ENCODE measurements at regions of chr6 and their contacts with region 1.

Region 1: DNA sequence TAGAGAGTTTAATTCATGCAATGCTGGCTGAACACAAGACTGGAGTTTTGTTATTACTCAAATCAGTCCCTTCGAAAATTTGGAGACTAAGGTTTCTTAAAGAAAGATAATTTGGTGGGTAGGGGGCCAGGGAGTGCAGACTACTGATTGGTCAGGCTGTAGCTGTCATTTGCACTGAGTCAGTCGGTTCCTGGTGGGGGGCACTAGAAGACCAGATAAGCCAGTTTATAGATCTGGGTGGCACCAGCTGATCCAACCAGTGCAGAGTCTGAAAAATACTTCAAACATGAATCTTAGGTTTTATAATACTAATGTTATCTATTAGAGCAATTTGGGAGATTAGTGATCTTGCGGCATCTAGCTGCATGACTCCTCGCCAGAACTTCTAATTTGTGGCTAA is 530.7 kb downstream of the NKAIN2 start:
- DNase-seq: no peak
- ATAC-seq: no peak
- H3K4me3 ChIP-seq: no peak overlapping the region
- H3K27ac ChIP-seq: no peak overlapping the region
- H3K4me1 ChIP-seq: no peaks in the 10 kb centered on the region
- H3K27me3 ChIP-seq: no peaks in the 10 kb centered on the region
- CTCF ChIP-seq: no peak
- EP300 ChIP-seq: no peak
- POLR2A ChIP-seq: no peak
- RAD21 ChIP-seq: no peak

Region 2: GRCh38 chr6:124420116-124420840 is 85.9 kb after region 1 on chr6:
- CTCF ChIA-PET with region 1: no interaction called
- POLR2A ChIA-PET with region 1: no interaction called
- RAD21 ChIA-PET with region 1: no interaction called
- SMC1A ChIA-PET with region 1: no interaction called
- in situ Hi-C with region 1: no loop called
- intact Hi-C with region 1: loop called (anchors 5 kb)
- DNase-seq: no peak
- ATAC-seq: no peak
- H3K4me3 ChIP-seq: no peak overlapping the region
- H3K27ac ChIP-seq: no peak overlapping the region
- H3K4me1 ChIP-seq: no peaks in the 10 kb centered on the region
- H3K27me3 ChIP-seq: no peaks in the 10 kb centered on the region
- CTCF ChIP-seq: no peak
- EP300 ChIP-seq: no peak
- POLR2A ChIP-seq: no peak
- RAD21 ChIP-seq: no peak

Region 3: DNA sequence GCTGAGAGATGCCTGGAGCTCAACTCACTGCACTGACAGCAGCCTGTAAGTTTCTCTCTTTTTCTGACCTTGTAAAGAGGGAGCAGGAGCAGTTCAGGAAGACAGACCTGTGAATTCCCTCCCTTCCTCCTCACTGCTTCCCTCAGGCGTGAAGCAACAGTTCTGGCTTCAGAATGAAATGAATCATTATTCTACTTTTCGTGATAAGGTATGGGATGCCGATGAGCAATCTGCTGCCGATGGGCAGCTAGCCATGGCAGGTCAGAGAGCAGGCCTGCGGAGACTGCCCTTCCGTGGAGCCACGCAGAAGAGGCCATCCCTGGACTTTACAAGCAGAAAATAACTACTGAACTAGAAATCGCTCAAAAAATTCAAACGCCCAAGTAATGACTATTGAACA is 201.4 kb after region 1 on chr6:
- CTCF ChIA-PET with region 1: no interaction called
- POLR2A ChIA-PET with region 1: no interaction called
- RAD21 ChIA-PET with region 1: no interaction called
- SMC1A ChIA-PET with region 1: no interaction called
- in situ Hi-C with region 1: no loop called
- intact Hi-C with region 1: no loop called
- DNase-seq: no peak
- ATAC-seq: no peak
- H3K4me3 ChIP-seq: no peak overlapping the region
- H3K27ac ChIP-seq: no peak overlapping the region
- H3K4me1 ChIP-seq: no peaks in the 10 kb centered on the region
- H3K27me3 ChIP-seq: no peaks in the 10 kb centered on the region
- CTCF ChIP-seq: no peak
- EP300 ChIP-seq: no peak
- POLR2A ChIP-seq: no peak
- RAD21 ChIP-seq: no peak